Gastrocnemius medialis (tissue), 4 donors: ENCODE measurements at regions of chr5 and their contacts with region 1.

Region 1: DNA sequence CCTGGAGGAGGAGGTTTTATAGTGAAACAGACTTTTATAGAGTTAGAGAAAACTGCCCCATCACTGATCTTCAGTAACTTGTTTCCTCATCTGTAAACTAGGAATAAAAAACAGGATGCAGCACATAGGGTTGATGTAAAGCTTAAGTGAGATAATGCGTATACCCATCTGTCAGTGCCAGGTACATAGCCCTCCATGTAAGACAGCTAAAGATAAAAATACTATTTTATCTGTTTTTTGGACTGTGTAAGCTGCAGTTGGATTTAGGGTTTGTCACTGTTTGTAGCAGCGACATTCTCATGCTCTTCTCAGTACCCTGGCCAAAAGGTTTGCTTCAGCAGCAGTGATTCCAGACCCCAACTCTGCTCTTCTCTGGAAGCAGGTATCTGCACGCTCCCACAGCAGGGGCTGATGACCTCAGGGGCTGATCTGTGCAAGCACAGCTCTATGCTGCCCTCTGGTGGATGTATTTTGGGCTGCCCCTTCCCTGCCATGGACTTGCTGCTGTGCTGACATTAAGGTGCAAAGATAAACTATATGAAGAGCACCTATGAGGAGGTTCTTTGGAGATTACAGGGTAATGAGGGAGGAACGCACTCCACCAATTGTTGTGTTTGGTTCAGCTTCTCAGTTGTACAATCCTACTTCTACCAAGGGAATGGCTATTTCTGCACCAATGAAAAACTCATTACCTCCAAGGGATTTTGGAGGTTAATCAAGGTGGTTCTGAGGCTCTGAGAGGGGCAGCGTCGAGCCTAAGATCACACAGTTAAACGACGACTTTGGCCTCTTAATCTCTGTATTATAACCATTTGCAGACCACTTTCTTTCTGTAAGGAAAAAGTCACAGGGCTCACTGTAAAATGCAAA is 13.1 kb downstream of the HMHB1 start:
- DNase-seq: peak; percentile 60 to 73
- ATAC-seq: peak; percentile 87 to 97
- H3K4me3 ChIP-seq: peak overlapping the region in 1 of 4 donors; percentile 9
- H3K27ac ChIP-seq: no peak overlapping the region
- H3K4me1 ChIP-seq: peaks cover 0 to 10% of the 10 kb centered on the region in 2 donors
- H3K27me3 ChIP-seq: no peaks in the 10 kb centered on the region
- CTCF ChIP-seq: peak; percentile 83 to 96 (median 93)
- POLR2A ChIP-seq: no peak

Region 2: DNA sequence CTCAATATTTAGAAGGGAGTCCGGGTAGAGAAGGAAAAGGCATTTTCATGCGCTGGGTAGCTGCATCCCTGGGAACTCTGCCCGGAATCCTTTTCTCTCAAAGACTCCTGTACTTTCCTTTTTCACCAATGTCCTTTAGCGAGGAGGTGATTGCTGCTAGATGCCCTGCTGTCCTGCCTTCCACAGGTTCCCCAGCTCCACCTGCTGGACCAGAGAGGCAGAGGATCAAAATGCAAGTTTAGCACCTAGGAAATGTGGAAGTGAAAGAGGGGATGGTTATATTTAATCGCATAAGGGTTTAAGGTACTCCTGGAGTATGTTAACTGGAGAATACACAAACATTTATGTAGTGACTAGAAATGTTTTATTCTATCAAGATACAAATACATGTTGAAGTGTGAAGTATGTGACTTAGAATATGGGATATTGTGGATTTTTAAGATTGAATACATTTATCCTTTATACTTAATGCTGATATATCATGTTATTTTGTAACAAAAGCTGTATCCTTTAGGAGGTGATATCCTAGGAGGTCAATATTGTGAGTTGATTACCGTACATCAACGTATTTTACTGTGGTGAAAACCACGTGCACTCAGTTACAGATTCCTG is 909.2 kb before region 1 on chr5:
- in situ Hi-C with region 1: loop called (anchors 10 kb)
- intact Hi-C with region 1: no loop called
- DNase-seq: no peak
- ATAC-seq: no peak
- H3K4me3 ChIP-seq: no peak overlapping the region
- H3K27ac ChIP-seq: peak overlapping the region in 1 of 4 donors; percentile 9
- H3K4me1 ChIP-seq: no peaks in the 10 kb centered on the region
- H3K27me3 ChIP-seq: no peaks in the 10 kb centered on the region
- CTCF ChIP-seq: no peak
- POLR2A ChIP-seq: no peak

Region 3: DNA sequence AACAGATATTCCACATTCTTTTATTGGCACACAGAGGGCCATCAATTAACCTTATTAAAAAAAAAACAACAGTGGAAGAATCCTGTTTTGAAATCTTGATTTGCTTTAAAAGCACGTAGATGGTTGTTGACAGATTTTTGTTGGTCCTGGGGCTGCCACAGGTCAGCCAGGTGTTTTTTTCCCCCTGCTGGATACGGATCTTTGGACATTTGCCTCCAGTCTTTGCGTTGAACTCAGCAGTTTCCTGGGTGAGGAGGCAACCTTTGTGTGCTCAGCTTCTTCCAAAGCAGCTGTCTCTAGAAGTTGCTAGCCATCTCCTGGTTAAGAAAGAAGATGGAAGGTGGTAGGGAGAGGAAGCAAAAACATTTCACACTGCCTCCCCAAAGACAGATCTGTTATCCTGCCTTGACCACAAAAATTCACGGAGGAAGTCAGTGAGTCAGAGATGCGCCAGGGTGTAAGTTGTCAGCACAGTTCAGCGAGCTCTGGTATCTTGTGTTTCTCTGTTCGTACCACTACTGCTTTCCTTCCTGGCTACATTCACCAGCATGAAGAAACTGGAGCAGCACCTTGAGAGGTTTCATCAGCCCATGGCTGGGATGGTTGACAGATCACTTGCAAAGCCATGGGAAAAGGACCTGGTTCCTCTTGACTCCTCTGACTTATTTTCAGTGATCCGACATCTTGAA is 847.6 kb before region 1 on chr5:
- in situ Hi-C with region 1: loop called in 1 of 4 experiments (anchors 25 kb)
- intact Hi-C with region 1: no loop called
- DNase-seq: peak in 1 of 2 donors; percentile 19
- ATAC-seq: peak; percentile 51 to 63
- H3K4me3 ChIP-seq: no peak overlapping the region
- H3K27ac ChIP-seq: no peak overlapping the region
- H3K4me1 ChIP-seq: peaks cover 15 to 16% of the 10 kb centered on the region in 2 donors
- H3K27me3 ChIP-seq: no peaks in the 10 kb centered on the region
- CTCF ChIP-seq: no peak
- POLR2A ChIP-seq: no peak

Region 4: DNA sequence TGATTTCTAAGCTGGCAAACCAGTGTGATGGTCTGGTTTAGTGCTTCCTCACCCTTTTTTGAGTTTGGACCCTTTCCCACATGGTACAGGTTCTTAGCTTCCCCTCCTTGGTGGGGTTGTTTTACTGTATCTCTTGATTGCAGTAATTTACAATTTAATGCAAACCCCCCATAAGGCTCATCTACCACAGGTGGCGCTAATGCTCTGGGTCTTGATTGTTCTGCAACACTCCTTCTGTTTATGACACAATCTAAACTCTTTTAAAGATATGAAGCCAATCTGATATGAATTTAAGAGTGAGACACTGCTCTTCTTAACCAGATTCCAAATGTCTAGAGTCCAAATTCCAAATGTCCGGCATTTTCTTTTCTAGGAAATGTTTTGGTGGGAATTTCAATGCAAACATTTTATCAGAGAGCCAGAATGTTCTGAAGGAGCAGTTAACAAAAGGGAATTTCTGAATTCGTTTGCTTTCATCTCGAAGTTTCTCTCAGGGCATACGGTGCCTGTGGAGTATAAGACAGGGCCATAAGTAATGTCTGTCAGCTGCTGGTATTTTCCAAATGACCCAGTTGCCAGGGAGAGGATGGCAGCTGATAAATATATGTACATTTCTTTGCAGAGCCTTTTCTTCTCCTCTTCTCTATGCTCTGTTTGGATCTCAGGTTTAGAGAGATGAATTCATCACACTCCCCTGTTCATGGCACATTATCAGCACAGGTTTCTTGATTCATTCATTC is 808.1 kb before region 1 on chr5:
- in situ Hi-C with region 1: no loop called
- intact Hi-C with region 1: loop called (anchors 5 kb)
- DNase-seq: no peak
- ATAC-seq: peak; percentile 55 to 62
- H3K4me3 ChIP-seq: no peak overlapping the region
- H3K27ac ChIP-seq: peak overlapping the region in 3 of 4 donors; percentile 12 to 49 (median 28)
- H3K4me1 ChIP-seq: peaks cover 0 to 14% of the 10 kb centered on the region in 2 donors
- H3K27me3 ChIP-seq: no peaks in the 10 kb centered on the region
- CTCF ChIP-seq: peak; percentile 40 to 60 (median 49)
- POLR2A ChIP-seq: no peak

Region 5: GRCh38 chr5:143195491-143195890 is 629.6 kb before region 1 on chr5:
- in situ Hi-C with region 1: no loop called
- intact Hi-C with region 1: loop called (anchors 10 kb)
- DNase-seq: no peak
- ATAC-seq: peak; percentile 70 to 86
- H3K4me3 ChIP-seq: no peak overlapping the region
- H3K27ac ChIP-seq: peak overlapping the region in 3 of 4 donors; percentile 24 to 29 (median 24)
- H3K4me1 ChIP-seq: peaks cover 30 to 33% of the 10 kb centered on the region in 2 donors
- H3K27me3 ChIP-seq: no peaks in the 10 kb centered on the region
- CTCF ChIP-seq: no peak
- POLR2A ChIP-seq: no peak

Region 6: DNA sequence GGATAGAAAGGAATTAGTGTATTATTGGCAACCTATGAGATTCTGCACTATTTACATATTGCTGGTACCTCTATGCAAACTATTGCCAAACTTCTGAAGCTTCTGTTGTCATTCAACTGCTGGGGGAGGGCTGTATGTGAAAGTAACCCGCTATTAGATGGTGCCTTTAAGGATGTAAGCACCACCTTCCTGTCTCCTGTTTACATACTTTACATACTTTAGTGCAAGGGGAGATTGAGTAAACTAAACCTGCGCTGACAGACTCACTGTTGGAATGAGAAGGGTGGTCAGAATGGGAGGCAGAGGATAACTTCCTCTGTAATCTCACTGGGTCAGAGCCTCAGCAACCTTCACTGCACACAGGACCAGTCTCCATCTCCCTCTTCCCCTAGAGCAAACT is 545.4 kb before region 1 on chr5:
- in situ Hi-C with region 1: no loop called
- intact Hi-C with region 1: no loop called
- DNase-seq: no peak
- ATAC-seq: no peak
- H3K4me3 ChIP-seq: no peak overlapping the region
- H3K27ac ChIP-seq: no peak overlapping the region
- H3K4me1 ChIP-seq: no peaks in the 10 kb centered on the region
- H3K27me3 ChIP-seq: no peaks in the 10 kb centered on the region
- CTCF ChIP-seq: no peak
- POLR2A ChIP-seq: no peak

Region 7: GRCh38 chr5:143964919-143965318 is 139.8 kb after region 1 on chr5:
- in situ Hi-C with region 1: no loop called
- intact Hi-C with region 1: no loop called
- DNase-seq: no peak
- ATAC-seq: no peak
- H3K4me3 ChIP-seq: no peak overlapping the region
- H3K27ac ChIP-seq: no peak overlapping the region
- H3K4me1 ChIP-seq: no peaks in the 10 kb centered on the region
- H3K27me3 ChIP-seq: no peaks in the 10 kb centered on the region
- CTCF ChIP-seq: no peak
- POLR2A ChIP-seq: no peak

Region 8: GRCh38 chr5:144142139-144142823 is 317.2 kb after region 1 on chr5:
- in situ Hi-C with region 1: loop called in 1 of 4 experiments (anchors 25 kb)
- intact Hi-C with region 1: no loop called
- DNase-seq: no peak
- ATAC-seq: peak in 1 of 2 donors; percentile 47
- H3K4me3 ChIP-seq: no peak overlapping the region
- H3K27ac ChIP-seq: no peak overlapping the region
- H3K4me1 ChIP-seq: peaks cover 20 to 30% of the 10 kb centered on the region in 2 donors
- H3K27me3 ChIP-seq: no peaks in the 10 kb centered on the region
- CTCF ChIP-seq: peak in 4 of 5 experiments; percentile 17 to 55 (median 42)
- POLR2A ChIP-seq: no peak